ENCODE measurements at regions of chrX and their contacts with region 1.

Region 1: DNA sequence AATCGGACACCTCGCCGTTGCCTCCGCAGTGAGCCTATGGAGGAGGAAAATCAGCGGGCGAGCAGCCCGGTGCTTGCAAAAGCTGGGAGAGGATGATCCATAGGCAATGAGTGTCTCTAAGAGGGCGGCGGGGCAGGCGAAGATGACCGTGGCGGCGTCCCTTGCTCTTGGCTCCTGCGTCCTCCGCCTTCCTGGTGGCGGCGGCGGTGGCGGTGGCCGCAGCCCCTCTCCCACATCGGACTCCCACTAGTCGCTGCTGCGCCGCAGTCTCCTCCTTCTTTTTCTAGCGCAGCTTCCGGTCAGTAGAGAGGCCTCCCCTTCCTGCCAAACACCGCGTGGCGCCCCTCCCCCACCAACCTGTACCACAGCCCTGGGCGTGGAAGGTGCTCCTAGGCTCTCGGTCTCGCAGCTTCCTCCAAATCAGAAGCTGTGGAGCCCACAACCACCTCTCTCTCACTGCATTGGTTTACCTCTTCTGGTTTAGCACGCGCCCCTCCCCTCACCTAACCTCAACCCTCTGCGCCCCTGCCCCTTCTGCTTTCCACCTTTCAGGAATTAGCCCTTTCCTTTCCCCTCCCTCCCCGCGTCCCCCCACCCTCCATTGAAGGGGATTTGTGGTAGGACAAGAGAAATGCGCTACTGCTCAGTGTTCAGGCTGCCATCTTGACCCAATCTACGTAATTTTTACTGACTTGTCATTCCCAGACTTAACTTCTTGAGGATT is at the start of gene SPIN3:
- DNase-seq: peak; percentile 40
- H3K4me3 Mint-ChIP-seq: peak within 1 kb of the TSS; percentile 88
- H3K27ac Mint-ChIP-seq: peak within 1 kb of the TSS; percentile 84
- H3K4me1 Mint-ChIP-seq: peaks cover 30% of the 10 kb centered on the region
- H3K27me3 Mint-ChIP-seq: no peaks in the 10 kb centered on the region
- total RNA-seq, gene SPIN3: 10.0 and 11.5 TPM in 2 replicates

Region 2: DNA sequence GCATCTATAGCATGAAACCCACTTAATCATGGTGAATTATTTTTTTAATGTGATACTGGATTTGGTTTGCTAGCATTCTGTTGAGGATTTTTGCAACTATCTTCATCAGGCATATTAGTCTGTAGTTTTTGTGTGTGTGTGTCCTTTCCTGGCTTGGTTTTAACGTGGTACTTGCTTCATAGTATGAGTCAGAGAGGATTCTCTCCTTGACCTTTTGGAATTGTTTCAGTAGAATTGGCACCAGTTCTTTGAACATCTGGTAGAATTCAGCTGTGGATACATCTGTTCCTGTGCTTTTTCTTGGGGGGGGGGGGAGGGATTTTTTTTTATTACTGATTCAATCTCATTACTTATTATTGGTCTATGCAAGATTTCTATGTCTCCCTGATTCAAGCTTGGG is 995.3 kb before region 1 on chrX:
- intact Hi-C with region 1: no loop called
- DNase-seq: no peak
- H3K4me3 Mint-ChIP-seq: no peak overlapping the region
- H3K27ac Mint-ChIP-seq: no peak overlapping the region
- H3K4me1 Mint-ChIP-seq: no peaks in the 10 kb centered on the region
- H3K27me3 Mint-ChIP-seq: no peaks in the 10 kb centered on the region

Region 3: GRCh38 chrX:57121162-57121741 is 125.8 kb after region 1 on chrX and contains the start of gene SPIN2B:
- intact Hi-C with region 1: loop called (anchors 10 kb)
- DNase-seq: peak; percentile 72
- H3K4me3 Mint-ChIP-seq: peak within 1 kb of the TSS; percentile 88
- H3K27ac Mint-ChIP-seq: peak within 1 kb of the TSS; percentile 84
- H3K4me1 Mint-ChIP-seq: peaks cover 7% of the 10 kb centered on the region
- H3K27me3 Mint-ChIP-seq: no peaks in the 10 kb centered on the region
- total RNA-seq, gene SPIN2B: 9.5 and 10.0 TPM in 2 replicates